T-cell (primary cell): ENCODE measurements at regions of chr11 and their contacts with region 1.

Region 1: DNA sequence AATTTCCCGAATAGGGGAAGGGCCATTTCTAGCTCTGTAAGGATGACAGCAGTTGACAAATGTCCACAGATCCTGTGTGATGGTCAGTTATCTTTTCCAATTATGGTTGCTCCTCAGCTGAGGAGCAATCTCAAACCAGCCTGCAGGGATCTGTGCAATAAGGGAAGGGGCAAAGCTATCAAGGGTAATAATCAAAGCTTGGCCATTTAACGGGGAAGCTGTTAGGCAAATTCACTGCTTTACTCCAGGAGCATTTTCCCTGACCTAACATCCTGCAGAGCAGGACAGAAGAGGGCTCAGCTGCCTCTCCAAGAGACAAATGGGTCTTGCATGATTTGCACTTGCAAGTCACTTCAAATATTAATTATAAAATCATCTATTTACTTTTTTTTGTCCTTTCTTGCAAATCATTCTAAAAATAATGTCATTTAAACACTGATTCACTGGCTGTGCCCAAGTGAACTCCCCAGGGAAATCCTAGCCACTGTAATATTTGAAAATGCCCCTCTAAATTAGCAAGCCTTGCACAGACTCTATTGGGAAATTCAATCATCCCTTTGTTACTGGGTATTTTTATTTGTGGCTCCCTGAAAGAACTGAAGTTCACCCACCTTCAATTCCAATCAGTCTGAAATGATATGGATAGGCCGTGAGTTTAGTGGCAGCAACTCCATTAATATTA is 1256.7 kb downstream of the LRRC4C start:
- DNase-seq: no peak
- ATAC-seq: no peak
- H3K4me3 ChIP-seq: no peak overlapping the region
- H3K4me3 Mint-ChIP-seq: no peak overlapping the region
- H3K27ac ChIP-seq: no peak overlapping the region
- H3K27ac Mint-ChIP-seq: no peak overlapping the region
- H3K4me1 ChIP-seq: no peaks in the 10 kb centered on the region
- H3K4me1 Mint-ChIP-seq: no peaks in the 10 kb centered on the region
- H3K27me3 ChIP-seq: no peaks in the 10 kb centered on the region
- H3K27me3 Mint-ChIP-seq: no peaks in the 10 kb centered on the region

Region 2: GRCh38 chr11:39910087-39910486 is 292.6 kb before region 1 on chr11:
- CTCF ChIA-PET with region 1: no interaction called
- POLR2A ChIA-PET with region 1: no interaction called
- DNase-seq: no peak
- ATAC-seq: no peak
- H3K4me3 ChIP-seq: no peak overlapping the region
- H3K4me3 Mint-ChIP-seq: no peak overlapping the region
- H3K27ac ChIP-seq: no peak overlapping the region
- H3K27ac Mint-ChIP-seq: no peak overlapping the region
- H3K4me1 ChIP-seq: no peaks in the 10 kb centered on the region
- H3K4me1 Mint-ChIP-seq: no peaks in the 10 kb centered on the region
- H3K27me3 ChIP-seq: no peaks in the 10 kb centered on the region
- H3K27me3 Mint-ChIP-seq: no peaks in the 10 kb centered on the region

Region 3: GRCh38 chr11:40188848-40189247 is 13.9 kb before region 1 on chr11:
- CTCF ChIA-PET with region 1: no interaction called
- POLR2A ChIA-PET with region 1: interaction called in 1 of 2 experiments, 12 read pairs
- DNase-seq: no peak
- ATAC-seq: no peak
- H3K4me3 ChIP-seq: no peak overlapping the region
- H3K4me3 Mint-ChIP-seq: no peak overlapping the region
- H3K27ac ChIP-seq: no peak overlapping the region
- H3K27ac Mint-ChIP-seq: no peak overlapping the region
- H3K4me1 ChIP-seq: no peaks in the 10 kb centered on the region
- H3K4me1 Mint-ChIP-seq: no peaks in the 10 kb centered on the region
- H3K27me3 ChIP-seq: no peaks in the 10 kb centered on the region
- H3K27me3 Mint-ChIP-seq: no peaks in the 10 kb centered on the region

Region 4: DNA sequence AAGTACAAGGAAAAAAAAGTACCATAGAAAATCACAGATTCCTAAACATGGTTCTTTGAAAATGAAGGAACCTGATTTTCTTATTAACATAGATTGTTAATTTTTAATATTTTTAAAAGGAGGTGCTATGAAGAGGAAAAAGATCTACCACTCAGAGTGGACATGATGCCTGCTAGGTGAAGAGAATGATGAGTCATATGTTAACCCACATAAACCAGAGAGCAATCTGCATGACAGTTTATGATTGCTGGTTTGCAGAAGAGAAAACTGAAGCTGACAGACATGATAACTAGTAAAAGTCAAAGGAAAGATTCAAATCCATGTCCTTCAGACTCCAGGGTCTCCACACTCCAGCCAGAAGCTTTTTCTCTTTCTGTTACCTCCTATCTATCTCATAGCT is 25.0 kb after region 1 on chr11:
- CTCF ChIA-PET with region 1: no interaction called
- POLR2A ChIA-PET with region 1: no interaction called
- DNase-seq: no peak
- ATAC-seq: no peak
- H3K4me3 ChIP-seq: no peak overlapping the region
- H3K4me3 Mint-ChIP-seq: no peak overlapping the region
- H3K27ac ChIP-seq: no peak overlapping the region
- H3K27ac Mint-ChIP-seq: no peak overlapping the region
- H3K4me1 ChIP-seq: no peaks in the 10 kb centered on the region
- H3K4me1 Mint-ChIP-seq: no peaks in the 10 kb centered on the region
- H3K27me3 ChIP-seq: no peaks in the 10 kb centered on the region
- H3K27me3 Mint-ChIP-seq: no peaks in the 10 kb centered on the region

Region 5: GRCh38 chr11:40255457-40255856 is 52.7 kb after region 1 on chr11:
- CTCF ChIA-PET with region 1: no interaction called
- POLR2A ChIA-PET with region 1: no interaction called
- DNase-seq: no peak
- ATAC-seq: no peak
- H3K4me3 ChIP-seq: no peak overlapping the region
- H3K4me3 Mint-ChIP-seq: no peak overlapping the region
- H3K27ac ChIP-seq: no peak overlapping the region
- H3K27ac Mint-ChIP-seq: no peak overlapping the region
- H3K4me1 ChIP-seq: no peaks in the 10 kb centered on the region
- H3K4me1 Mint-ChIP-seq: no peaks in the 10 kb centered on the region
- H3K27me3 ChIP-seq: no peaks in the 10 kb centered on the region
- H3K27me3 Mint-ChIP-seq: no peaks in the 10 kb centered on the region